ENCODE measurements at regions of chr10 and their contacts with region 1.

Region 1: DNA sequence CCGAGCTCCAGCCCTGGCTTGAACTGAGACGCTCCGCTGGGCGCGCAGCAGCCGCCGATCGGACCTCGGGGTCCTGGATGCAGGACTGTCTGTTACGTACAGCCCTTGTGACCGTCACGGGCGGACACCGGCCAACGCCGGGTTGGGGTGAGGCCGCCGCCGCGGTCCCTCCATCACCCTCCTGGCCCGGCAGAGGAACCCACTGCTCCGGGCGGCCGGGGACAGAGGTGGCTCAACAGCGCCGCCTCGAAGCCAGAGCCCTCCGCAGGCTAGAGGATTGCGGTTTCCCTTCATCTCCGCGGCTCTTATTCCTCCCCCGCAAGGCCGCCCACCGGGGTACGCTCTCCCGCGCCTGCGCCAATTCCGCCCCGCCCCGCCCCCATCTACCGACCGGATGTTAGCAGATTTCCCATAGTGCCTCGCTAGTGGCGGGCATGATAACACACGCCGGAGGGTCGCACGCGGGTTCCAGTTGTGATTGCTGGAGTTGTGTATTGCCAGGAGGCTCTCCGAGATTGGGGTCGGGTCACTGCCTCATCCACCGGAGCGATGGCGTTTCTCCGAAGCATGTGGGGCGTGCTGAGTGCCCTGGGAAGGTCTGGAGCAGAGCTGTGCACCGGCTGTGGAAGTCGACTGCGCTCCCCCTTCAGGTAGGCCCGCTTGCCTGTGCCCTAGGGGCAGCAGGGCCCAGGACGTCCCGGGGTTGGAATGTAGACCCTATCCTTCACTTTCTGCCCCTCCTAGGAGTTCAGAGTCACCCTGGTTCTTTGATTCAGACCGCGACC is at the start of gene TFAM:
- DNase-seq: peak; percentile 98
- H3K4me3 Mint-ChIP-seq: peak within 1 kb of the TSS; percentile 92
- H3K27ac Mint-ChIP-seq: peak within 1 kb of the TSS; percentile 96
- H3K4me1 Mint-ChIP-seq: peaks cover 27% of the 10 kb centered on the region
- H3K27me3 Mint-ChIP-seq: peaks cover 2% of the 10 kb centered on the region
- total RNA-seq, gene TFAM: 102 and 108 TPM in 2 replicates

Region 2: DNA sequence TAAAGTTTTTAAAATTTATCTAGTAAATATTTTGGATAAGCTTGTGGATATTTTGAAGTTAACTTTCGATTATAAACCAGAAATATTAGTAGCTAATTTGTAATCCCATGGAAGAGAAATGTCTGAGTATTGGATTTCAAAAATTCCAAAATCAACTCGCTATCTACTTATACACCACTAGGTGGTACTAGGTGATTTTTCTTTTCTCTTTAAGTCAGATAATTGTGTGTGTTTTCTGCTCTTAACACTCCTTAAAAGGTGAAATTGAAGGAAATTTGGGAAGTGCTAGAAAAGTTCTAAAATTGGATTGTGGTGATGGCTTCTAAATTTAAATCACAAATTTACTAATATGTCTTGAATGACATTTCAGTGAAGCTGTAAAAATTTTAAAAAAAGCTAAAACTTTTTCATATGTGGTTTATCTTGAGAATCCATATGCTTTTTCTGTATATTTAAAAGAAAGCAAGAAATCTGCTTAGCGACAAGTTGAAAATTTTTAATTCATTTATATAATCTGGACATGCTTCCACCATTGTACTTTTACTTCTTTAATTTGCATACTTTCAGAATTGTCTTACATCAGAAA is 207.7 kb before region 1 on chr10:
- intact Hi-C with region 1: loop called (anchors 5 kb)
- DNase-seq: no peak
- H3K4me3 Mint-ChIP-seq: no peak overlapping the region
- H3K27ac Mint-ChIP-seq: no peak overlapping the region
- H3K4me1 Mint-ChIP-seq: no peaks in the 10 kb centered on the region
- H3K27me3 Mint-ChIP-seq: peaks cover 3% of the 10 kb centered on the region

Region 3: DNA sequence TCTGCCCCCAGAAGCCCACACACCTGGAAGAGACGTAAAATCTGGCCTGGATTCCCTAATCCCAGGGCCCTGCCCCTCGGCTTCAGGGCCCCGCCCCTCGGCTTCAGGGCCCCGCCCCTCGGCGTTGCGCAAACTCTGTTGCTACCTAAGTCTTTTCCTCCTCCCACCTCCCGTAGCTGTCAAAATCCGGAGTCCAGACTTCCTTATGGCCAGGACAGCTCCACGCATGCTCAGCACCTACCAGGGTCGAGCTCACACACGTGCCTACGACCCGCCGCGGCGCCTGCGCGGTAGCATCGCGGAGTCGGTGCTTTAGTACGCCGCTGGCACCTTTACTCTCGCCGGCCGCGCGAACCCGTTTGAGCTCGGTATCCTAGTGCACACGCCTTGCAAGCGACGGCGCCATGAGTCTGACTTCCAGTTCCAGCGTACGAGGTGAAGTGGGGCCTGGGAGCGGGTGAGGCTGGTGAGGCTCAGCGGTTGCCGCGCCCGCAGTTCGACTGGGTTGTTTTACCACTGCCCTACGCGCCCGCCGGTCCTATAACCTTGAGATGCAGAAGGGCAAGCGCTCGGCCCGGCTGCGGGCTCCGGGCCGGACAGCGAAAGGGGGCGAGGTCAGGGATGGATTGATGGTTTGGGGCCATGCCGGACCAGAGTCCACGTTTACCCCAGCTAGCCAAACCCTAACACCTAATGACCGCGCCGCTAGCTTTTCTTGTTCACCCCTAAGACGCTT is 116.2 kb before region 1 on chr10 and contains the start of gene CISD1:
- intact Hi-C with region 1: loop called (anchors 1 kb)
- DNase-seq: peak; percentile 99
- H3K4me3 Mint-ChIP-seq: peak within 1 kb of the TSS; percentile 100
- H3K27ac Mint-ChIP-seq: peak within 1 kb of the TSS; percentile 98
- H3K4me1 Mint-ChIP-seq: peaks cover 31% of the 10 kb centered on the region
- H3K27me3 Mint-ChIP-seq: peaks cover 2% of the 10 kb centered on the region
- total RNA-seq, gene CISD1: 62.6 and 64.2 TPM in 2 replicates

Region 4: DNA sequence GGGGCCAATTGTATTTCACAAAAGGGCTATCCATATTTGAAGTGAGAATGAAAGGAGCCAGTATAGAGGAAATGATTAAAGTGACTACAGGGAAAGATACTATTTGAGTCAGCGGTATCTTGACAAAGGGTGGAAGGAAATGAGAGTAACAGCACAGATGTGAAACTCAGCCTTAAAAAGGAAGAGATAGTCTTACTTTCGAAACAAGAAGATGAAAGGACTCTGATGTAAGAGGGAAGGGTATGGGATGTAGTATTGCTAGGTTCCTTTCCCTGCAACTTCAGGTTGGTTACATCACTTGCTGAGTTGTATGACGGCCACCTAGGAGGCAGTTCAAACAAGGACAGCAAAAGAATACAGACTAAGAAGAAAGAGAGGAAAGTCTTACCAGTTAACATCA is 102.6 kb before region 1 on chr10:
- intact Hi-C with region 1: loop called (anchors 5 kb)
- DNase-seq: peak; percentile 81
- H3K4me3 Mint-ChIP-seq: peak overlapping the region; percentile 63
- H3K27ac Mint-ChIP-seq: peak overlapping the region; percentile 70
- H3K4me1 Mint-ChIP-seq: peaks cover 32% of the 10 kb centered on the region
- H3K27me3 Mint-ChIP-seq: no peaks in the 10 kb centered on the region

Region 5: GRCh38 chr10:58299580-58299979 is 85.6 kb before region 1 on chr10:
- intact Hi-C with region 1: loop called (anchors 1 kb)
- DNase-seq: peak; percentile 85
- H3K4me3 Mint-ChIP-seq: no peak overlapping the region
- H3K27ac Mint-ChIP-seq: no peak overlapping the region
- H3K4me1 Mint-ChIP-seq: peaks cover 2% of the 10 kb centered on the region
- H3K27me3 Mint-ChIP-seq: peaks cover 19% of the 10 kb centered on the region

Region 6: GRCh38 chr10:58334817-58335305 is 50.3 kb before region 1 on chr10 and contains the start of gene UBE2D1:
- intact Hi-C with region 1: loop called (anchors 1 kb)
- DNase-seq: peak; percentile 94
- H3K4me3 Mint-ChIP-seq: peak within 1 kb of the TSS; percentile 98
- H3K27ac Mint-ChIP-seq: peak within 1 kb of the TSS; percentile 88
- H3K4me1 Mint-ChIP-seq: peaks cover 22% of the 10 kb centered on the region
- H3K27me3 Mint-ChIP-seq: peaks cover 15% of the 10 kb centered on the region
- total RNA-seq, gene UBE2D1: 15.1 and 19.4 TPM in 2 replicates

Region 7: GRCh38 chr10:58372607-58373441 is 12.4 kb before region 1 on chr10:
- intact Hi-C with region 1: loop called (anchors 1 kb)
- DNase-seq: no peak
- H3K4me3 Mint-ChIP-seq: no peak overlapping the region
- H3K27ac Mint-ChIP-seq: no peak overlapping the region
- H3K4me1 Mint-ChIP-seq: no peaks in the 10 kb centered on the region
- H3K27me3 Mint-ChIP-seq: no peaks in the 10 kb centered on the region